ENCODE measurements at regions of chr14 and their contacts with region 1.

Region 1: DNA sequence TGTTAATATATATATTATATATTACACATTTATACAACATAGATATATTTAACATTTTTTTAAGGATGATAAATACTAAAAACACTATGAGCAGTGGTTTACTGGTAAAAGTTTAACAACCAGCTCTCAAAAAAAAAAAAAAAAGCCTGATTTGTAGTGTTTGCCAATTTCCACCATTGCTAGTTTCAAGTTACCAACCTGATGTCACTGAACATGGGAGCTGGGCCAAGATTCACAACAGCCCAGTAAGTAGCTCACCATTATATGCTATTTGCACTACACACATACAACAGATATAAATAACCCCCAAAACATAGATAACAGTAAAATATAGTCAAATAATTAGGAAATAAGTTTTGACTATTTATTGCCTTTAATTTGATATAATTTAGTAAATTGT is 28.9 kb upstream of the TMX1 start:
- DNase-seq: no peak
- ATAC-seq: no peak
- H3K4me3 ChIP-seq: no peak overlapping the region
- H3K4me3 Mint-ChIP-seq: no peak overlapping the region
- H3K27ac ChIP-seq: no peak overlapping the region
- H3K27ac Mint-ChIP-seq: no peak overlapping the region
- H3K4me1 ChIP-seq: no peaks in the 10 kb centered on the region
- H3K4me1 Mint-ChIP-seq: no peaks in the 10 kb centered on the region
- H3K27me3 ChIP-seq: no peaks in the 10 kb centered on the region
- H3K27me3 Mint-ChIP-seq: peaks cover 26% of the 10 kb centered on the region
- CTCF ChIP-seq: no peak

Region 2: DNA sequence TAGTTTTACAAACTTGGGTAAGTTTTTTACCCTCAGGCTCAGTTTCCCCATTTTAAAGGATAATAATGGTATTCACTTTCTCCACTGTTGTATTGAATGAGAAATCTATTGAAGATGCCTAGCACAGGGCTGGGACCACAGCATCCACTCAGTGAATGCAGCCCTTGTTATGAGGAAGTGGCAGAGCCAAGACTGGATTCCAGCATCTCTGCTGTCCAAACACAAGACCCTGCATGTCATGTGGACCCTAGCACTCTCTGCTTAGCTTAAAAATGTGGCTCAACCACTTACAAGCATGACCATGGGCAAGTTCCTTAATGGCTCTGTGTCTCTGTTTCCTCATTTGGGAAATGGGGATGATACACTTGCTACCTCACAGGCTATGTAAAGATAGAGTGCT is 92.1 kb before region 1 on chr14:
- CTCF ChIA-PET with region 1: no interaction called
- POLR2A ChIA-PET with region 1: no interaction called
- intact Hi-C with region 1: loop called in 1 of 2 experiments (anchors 5 kb)
- DNase-seq: no peak
- ATAC-seq: no peak
- H3K4me3 ChIP-seq: no peak overlapping the region
- H3K4me3 Mint-ChIP-seq: no peak overlapping the region
- H3K27ac ChIP-seq: no peak overlapping the region
- H3K27ac Mint-ChIP-seq: no peak overlapping the region
- H3K4me1 ChIP-seq: no peaks in the 10 kb centered on the region
- H3K4me1 Mint-ChIP-seq: no peaks in the 10 kb centered on the region
- H3K27me3 ChIP-seq: no peaks in the 10 kb centered on the region
- H3K27me3 Mint-ChIP-seq: no peaks in the 10 kb centered on the region
- CTCF ChIP-seq: no peak